MCF 10A (cell line): ENCODE measurements at regions of chr15 and their contacts with region 1.

Region 1: GRCh38 chr15:82146990-82147461 is 101.2 kb upstream of the MEX3B start:
- DNase-seq: peak; percentile 73
- H3K4me3 Mint-ChIP-seq: no peak overlapping the region
- H3K27ac Mint-ChIP-seq: peak overlapping the region; percentile 89
- H3K4me1 Mint-ChIP-seq: peaks cover 16% of the 10 kb centered on the region
- H3K27me3 Mint-ChIP-seq: no peaks in the 10 kb centered on the region
- CTCF ChIP-seq: no peak

Region 2: GRCh38 chr15:82159922-82160321 is 12.9 kb after region 1 on chr15:
- CTCF ChIA-PET with region 1: interaction called, 4 read pairs
- POLR2A ChIA-PET with region 1: interaction called, 27 read pairs
- intact Hi-C with region 1: loop called (anchors 1 kb)
- DNase-seq: peak; percentile 94
- H3K4me3 Mint-ChIP-seq: no peak overlapping the region
- H3K27ac Mint-ChIP-seq: peak overlapping the region; percentile 82
- H3K4me1 Mint-ChIP-seq: no peaks in the 10 kb centered on the region
- H3K27me3 Mint-ChIP-seq: no peaks in the 10 kb centered on the region
- CTCF ChIP-seq: no peak